ENCODE measurements at regions of chr9 and their contacts with region 1.

Region 1: GRCh38 chr9:22008736-22009562 is at the start of gene CDKN2B:
- DNase-seq: peak; percentile 96 to 99 (median 97)
- ATAC-seq: peak; percentile 99 to 100 (median 100)
- H3K4me3 ChIP-seq: peak within 1 kb of the TSS; percentile 52 to 82 (median 70)
- H3K27ac ChIP-seq: peak within 1 kb of the TSS; percentile 35 to 88 (median 80)
- H3K4me1 ChIP-seq: peaks cover 0 to 22% (median 7%) of the 10 kb centered on the region in 12 donors
- H3K27me3 ChIP-seq: peaks cover 10 to 39% (median 25%) of the 10 kb centered on the region in 9 donors
- CTCF ChIP-seq: peak; percentile 74 to 95 (median 90)
- POLR2A ChIP-seq: peak in 1 of 2 donors; percentile 78
- total RNA-seq, gene CDKN2B: 1.1 to 4.8 (median 1.9) TPM

Region 2: GRCh38 chr9:21334701-21335632 is 674.0 kb before region 1 on chr9 and contains the start of gene KLHL9:
- intact Hi-C with region 1: loop called in 1 of 10 experiments (anchors 5 kb)
- DNase-seq: peak; percentile 94 to 97 (median 95)
- ATAC-seq: peak; percentile 99 to 100 (median 100)
- H3K4me3 ChIP-seq: peak within 1 kb of the TSS; percentile 69 to 97 (median 82)
- H3K27ac ChIP-seq: peak within 1 kb of the TSS; percentile 91 to 99 (median 94)
- H3K4me1 ChIP-seq: peaks cover 12 to 50% (median 44%) of the 10 kb centered on the region in 12 donors
- H3K27me3 ChIP-seq: peaks cover 0 to under 1% (median 0%) of the 10 kb centered on the region in 9 donors
- CTCF ChIP-seq: peak in 1 of 12 donors; percentile 22
- POLR2A ChIP-seq: peak in 1 of 2 donors; percentile 59
- total RNA-seq, gene KLHL9: 10.7 to 15.1 (median 11.8) TPM

Region 3: GRCh38 chr9:21802195-21803000 is 206.6 kb before region 1 on chr9 and contains the start of gene MTAP:
- intact Hi-C with region 1: loop called in 1 of 10 experiments (anchors 10 kb)
- DNase-seq: peak; percentile 93 to 96 (median 93)
- ATAC-seq: peak; percentile 94 to 99 (median 98)
- H3K4me3 ChIP-seq: peak within 1 kb of the TSS; percentile 64 to 96 (median 82)
- H3K27ac ChIP-seq: peak within 1 kb of the TSS; percentile 79 to 95 (median 86)
- H3K4me1 ChIP-seq: peaks cover 0 to 37% (median 26%) of the 10 kb centered on the region in 12 donors
- H3K27me3 ChIP-seq: peaks cover 0 to 11% (median 0%) of the 10 kb centered on the region in 9 donors
- CTCF ChIP-seq: no peak
- POLR2A ChIP-seq: peak in 1 of 2 donors; percentile 90
- total RNA-seq, gene MTAP: 12.6 to 27.3 (median 19.4) TPM

Region 4: DNA sequence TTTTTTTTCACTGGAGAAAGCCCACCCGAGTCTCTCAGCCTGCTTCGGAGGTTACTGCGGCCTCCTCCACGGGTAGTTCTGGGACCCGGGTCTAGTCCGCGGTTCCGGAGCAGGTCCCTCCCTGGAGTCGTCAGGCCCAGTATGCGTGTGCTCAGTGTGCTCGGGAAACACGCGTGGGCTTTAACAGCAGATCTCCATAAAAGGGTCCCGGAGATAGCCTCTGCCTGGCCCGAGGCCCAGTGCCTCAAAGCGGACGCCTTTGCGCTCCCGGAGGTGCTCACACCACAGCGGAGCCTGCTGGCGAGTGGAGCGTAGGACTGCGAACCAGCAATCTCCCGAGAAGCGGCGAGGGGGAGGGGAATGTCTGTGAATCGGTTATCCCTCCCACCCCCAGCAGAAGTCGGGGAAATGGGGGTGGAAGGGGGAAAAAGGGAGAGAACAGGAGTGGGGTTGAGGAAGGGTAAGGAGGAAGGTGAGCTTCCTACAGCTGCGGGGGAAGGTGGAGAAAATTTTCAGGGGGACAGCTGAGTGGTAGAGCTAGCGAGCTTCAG is 43.5 kb before region 1 on chr9:
- intact Hi-C with region 1: loop called in 1 of 10 experiments (anchors 5 kb)
- DNase-seq: peak in 2 of 5 donors; percentile 39 to 68
- ATAC-seq: peak in 3 of 4 donors; percentile 45 to 67 (median 64)
- H3K4me3 ChIP-seq: peak overlapping the region in 9 of 12 donors; percentile 5 to 52 (median 16)
- H3K27ac ChIP-seq: no peak overlapping the region
- H3K4me1 ChIP-seq: peaks cover 0 to 26% (median 10%) of the 10 kb centered on the region in 12 donors
- H3K27me3 ChIP-seq: peaks cover 55 to 95% (median 80%) of the 10 kb centered on the region in 9 donors
- CTCF ChIP-seq: peak in 3 of 12 donors; percentile 6 to 17 (median 16)
- POLR2A ChIP-seq: no peak

Region 5: DNA sequence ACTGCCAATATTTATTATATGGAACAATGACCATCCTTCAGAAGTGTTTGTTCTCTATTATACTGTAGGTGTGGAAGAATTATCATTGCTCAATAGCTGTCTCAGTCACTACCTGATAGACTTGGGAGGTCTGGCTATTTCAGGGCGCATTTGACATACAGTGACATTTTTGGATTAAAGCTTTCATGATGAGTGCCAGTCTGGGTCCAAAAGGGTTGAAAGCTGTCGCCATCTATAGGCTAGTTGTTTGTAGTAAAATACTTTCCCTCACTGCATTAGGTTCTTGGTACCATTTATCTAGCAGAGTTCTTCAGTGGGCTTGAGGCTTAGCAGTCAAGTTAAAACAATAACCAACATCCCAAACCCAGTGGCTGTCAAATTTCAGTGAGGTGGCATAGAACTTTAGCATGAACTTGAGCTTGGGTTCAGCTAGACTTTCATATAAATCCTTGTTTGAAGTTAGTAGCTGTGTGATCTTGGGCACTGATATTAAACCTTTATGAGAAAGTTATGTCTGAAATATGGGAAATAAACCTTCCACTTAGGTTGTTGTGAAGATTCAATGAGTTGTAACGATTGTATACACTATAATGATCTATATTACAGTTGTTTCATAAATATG is 110.7 kb after region 1 on chr9:
- intact Hi-C with region 1: loop called in 1 of 10 experiments (anchors 10 kb)
- DNase-seq: peak in 1 of 5 donors; percentile 7
- ATAC-seq: peak in 3 of 4 donors; percentile 63 to 79 (median 79)
- H3K4me3 ChIP-seq: no peak overlapping the region
- H3K27ac ChIP-seq: no peak overlapping the region
- H3K4me1 ChIP-seq: peaks cover 0 to 5% (median 0%) of the 10 kb centered on the region in 12 donors
- H3K27me3 ChIP-seq: peaks cover 0 to 3% (median 0%) of the 10 kb centered on the region in 9 donors
- CTCF ChIP-seq: peak; percentile 13 to 52 (median 31)
- POLR2A ChIP-seq: no peak

Region 6: DNA sequence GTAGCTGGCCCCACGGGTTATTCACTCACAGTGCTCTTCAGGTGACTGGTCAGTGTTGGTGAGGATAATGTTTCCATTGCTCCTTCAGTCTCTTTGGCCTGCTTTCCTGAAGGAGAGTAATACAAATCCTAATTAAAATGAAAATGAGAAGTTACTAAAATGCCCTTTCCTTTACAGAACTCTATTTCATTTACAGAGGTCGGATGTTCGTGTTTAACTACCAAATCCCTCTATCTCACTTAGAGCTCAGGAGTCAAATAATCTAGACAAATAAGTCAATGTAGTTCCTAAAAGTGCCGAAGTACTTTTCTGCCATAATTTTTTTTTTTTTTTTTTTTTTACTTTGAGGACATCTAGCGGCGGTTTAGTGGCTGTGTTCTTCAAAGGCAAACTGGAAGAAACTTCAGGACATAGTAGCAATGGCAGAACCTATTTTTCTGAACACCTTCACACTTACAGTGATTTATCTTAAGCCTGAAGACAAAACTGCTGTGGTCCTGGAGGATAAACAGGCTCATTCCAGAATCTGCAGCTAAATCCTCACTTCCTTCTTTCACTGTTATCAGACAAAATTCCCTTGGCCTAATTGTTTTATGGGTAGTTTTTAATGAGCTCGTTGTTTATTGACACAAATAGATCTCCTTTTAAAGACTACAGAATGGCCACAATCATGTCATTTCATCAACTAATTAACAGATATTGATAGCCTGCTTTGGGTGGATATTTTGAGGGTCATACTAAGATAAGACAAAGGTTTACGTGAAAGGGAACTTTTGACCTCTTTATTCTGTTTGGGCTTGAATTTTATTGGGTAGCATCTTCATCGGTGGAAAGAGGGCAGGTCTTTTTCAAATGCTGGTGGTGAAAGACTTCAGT is 230.1 kb after region 1 on chr9:
- intact Hi-C with region 1: loop called in 1 of 10 experiments (anchors 5 kb)
- DNase-seq: no peak
- ATAC-seq: peak in 1 of 4 donors; percentile 53
- H3K4me3 ChIP-seq: no peak overlapping the region
- H3K27ac ChIP-seq: no peak overlapping the region
- H3K4me1 ChIP-seq: peaks cover 0 to 6% (median 0%) of the 10 kb centered on the region in 12 donors
- H3K27me3 ChIP-seq: no peaks in the 10 kb centered on the region
- CTCF ChIP-seq: peak in 11 of 12 donors; percentile 28 to 56 (median 49)
- POLR2A ChIP-seq: no peak